Breast epithelium (tissue), 4 donors: ENCODE measurements at regions of chr13 and their contacts with region 1.

Region 1: GRCh38 chr13:31965361-31966066 is 66.1 kb upstream of the FRY start:
- DNase-seq: no peak
- H3K4me3 ChIP-seq: no peak overlapping the region
- H3K27ac ChIP-seq: no peak overlapping the region
- H3K4me1 ChIP-seq: no peaks in the 10 kb centered on the region
- H3K27me3 ChIP-seq: no peaks in the 10 kb centered on the region
- CTCF ChIP-seq: no peak
- POLR2A ChIP-seq: no peak

Region 2: GRCh38 chr13:31631071-31631470 is 334.4 kb before region 1 on chr13:
- intact Hi-C with region 1: loop called (anchors 5 kb)
- DNase-seq: no peak
- H3K4me3 ChIP-seq: no peak overlapping the region
- H3K27ac ChIP-seq: no peak overlapping the region
- H3K4me1 ChIP-seq: no peaks in the 10 kb centered on the region
- H3K27me3 ChIP-seq: no peaks in the 10 kb centered on the region
- CTCF ChIP-seq: no peak
- POLR2A ChIP-seq: no peak

Region 3: GRCh38 chr13:31930901-31931522 is 34.5 kb before region 1 on chr13:
- intact Hi-C with region 1: no loop called
- DNase-seq: no peak
- H3K4me3 ChIP-seq: no peak overlapping the region
- H3K27ac ChIP-seq: no peak overlapping the region
- H3K4me1 ChIP-seq: no peaks in the 10 kb centered on the region
- H3K27me3 ChIP-seq: no peaks in the 10 kb centered on the region
- CTCF ChIP-seq: no peak
- POLR2A ChIP-seq: no peak